Right cardiac atrium (tissue), 5 donors: ENCODE measurements at regions of chr17 and their contacts with region 1.

Region 1: DNA sequence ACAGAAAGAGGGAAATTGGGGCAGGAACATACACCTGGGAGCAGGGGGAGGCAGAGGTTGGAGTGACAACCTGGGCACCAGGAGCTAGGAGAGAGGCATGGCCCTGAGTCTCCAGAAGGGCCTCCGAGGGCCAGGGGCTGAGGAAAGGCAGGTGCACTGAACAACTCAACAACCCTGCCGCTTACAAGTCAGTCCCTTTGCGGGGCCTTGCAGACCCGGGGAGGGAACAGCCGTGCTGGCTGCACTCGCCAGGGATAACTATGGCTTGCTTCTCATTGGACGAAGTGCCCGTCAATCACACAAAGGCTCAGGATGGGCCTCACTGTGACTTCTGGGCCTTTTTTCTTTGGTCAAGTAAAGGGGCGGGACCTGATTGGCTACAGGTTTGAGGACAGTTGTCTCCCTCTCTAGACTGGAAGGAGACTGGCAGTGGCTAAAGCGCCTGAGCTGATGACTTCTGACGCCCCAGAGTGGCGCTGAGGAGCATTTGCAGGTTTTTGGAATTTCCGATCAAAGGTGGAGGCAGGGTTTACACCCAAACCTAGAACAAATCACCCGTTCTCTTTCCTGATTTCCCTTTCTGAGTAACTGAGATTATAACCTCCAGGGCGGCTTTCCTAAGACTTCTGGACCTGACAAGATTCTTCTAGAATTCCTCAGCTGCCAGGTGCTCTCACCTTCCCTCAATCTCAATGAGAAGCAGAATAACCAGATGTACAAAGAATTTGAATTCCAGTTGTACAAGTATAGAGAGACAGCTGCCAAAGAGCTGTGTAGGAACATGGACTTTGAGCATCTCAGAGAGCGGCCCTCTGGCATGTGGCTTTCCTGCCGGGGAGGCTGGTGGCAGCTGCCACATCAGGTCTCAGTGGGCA is 27.6 kb upstream of the ST6GALNAC2 start:
- DNase-seq: no peak
- ATAC-seq: no peak
- H3K4me3 ChIP-seq: no peak overlapping the region
- H3K27ac ChIP-seq: no peak overlapping the region
- H3K4me1 ChIP-seq: no peaks in the 10 kb centered on the region
- H3K27me3 ChIP-seq: no peaks in the 10 kb centered on the region

Region 2: DNA sequence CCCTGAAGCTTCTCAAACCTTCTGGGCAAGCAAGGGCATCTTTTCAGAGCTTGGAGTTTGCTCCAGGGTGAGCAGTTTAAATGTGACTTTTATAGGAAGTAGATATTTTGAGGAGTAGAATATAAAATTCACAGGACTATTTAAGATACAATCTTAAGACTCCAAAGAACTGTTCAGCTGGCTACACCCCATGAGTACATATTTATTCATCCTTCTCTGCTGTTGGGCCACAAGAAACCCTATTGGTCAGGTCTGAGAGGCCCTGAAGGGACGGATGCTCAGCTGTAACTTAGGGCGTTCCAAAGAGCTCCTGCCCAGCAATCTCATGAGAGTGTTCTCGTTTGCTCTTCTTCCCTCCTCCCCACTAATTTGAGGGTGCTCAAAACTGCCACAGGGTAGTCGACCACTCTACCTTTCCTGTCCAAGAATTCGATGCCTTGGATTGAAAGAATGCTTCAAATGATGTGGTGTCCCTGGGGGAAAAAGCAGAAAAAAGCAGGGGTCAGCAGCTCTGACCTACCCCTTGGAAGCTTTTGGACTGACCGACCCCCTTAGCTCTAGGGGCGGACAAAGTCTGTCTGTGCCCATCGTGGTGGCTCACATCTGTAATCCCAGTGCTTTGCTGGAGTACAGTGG is 34.8 kb before region 1 on chr17:
- intact Hi-C with region 1: loop called in 1 of 4 experiments (anchors 5 kb)
- DNase-seq: no peak
- ATAC-seq: no peak
- H3K4me3 ChIP-seq: no peak overlapping the region
- H3K27ac ChIP-seq: no peak overlapping the region
- H3K4me1 ChIP-seq: no peaks in the 10 kb centered on the region
- H3K27me3 ChIP-seq: no peaks in the 10 kb centered on the region